ENCODE measurements at regions of chr11 and their contacts with region 1.

Region 1: DNA sequence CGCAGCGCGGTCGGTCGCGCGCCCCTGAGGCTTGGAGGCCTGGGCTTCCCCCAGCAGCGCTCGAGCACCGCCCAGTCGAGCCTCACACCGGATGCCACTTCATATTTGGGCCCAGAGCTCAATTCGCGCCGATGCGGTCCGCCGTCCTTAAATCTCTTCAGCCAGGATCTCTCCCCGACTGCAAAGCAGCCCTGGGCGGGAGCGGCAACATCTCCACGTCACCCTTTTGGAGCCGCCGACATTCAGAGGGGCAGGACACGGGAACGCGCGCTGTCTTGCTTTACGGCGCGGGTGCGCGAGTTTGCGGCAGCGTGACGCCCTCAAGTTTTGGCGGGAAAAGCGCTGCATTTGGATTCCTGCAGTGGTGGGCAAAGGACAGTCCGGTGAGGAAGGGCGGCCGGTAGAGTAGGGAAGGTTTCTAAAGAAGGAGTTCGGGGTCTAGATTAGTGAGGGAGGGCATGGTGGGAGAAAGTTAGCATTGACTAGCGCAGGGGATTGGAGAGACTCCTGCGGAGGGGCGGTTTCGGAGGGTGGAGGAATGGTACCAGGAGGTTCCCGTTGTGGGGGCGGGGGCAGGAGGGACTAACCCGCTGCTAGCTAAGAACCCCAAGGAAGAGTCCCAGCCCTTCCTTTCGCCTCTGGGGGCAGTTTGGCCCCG is 796 bp downstream of the CHEK1 start:
- DNase-seq: peak; percentile 92
- H3K4me3 Mint-ChIP-seq: peak overlapping the region; percentile 88
- H3K27ac Mint-ChIP-seq: peak overlapping the region; percentile 93
- H3K4me1 Mint-ChIP-seq: peaks cover 21% of the 10 kb centered on the region
- H3K27me3 Mint-ChIP-seq: no peaks in the 10 kb centered on the region

Region 2: DNA sequence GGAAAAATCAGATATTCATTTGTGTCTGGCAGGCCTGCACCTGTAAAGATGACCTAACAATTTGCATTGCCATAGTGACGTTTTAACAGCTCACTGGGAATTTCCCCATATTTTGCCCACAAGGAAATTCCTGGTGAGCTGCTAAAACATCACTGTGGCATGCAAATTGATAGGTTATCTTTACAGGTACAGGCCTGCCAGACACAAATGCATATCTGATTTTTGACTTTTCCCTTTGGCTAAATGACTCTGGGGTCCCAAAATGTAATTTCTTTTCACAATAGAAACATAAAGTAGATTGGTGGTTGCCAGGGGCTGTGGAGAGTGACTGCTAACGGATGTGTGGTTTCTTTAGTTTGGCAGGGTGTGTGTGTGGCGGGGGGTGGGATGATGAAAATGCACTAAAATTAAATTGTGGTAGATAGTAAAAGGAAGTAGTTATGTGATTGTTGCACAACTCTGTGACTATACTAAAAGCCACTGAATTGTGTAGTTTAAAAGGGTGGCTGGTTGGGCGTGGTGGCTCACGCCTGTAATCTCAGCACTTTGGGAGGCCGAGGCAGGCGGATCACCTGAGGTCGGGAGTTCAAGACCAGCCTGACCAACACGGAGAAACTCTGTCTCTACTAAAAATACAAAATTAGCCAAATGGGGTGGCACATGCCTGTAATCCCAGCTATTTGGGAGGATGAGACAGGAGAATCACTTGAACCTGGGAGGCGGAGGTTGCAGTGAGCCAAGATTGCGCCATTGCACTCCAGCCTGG is 111.2 kb before region 1 on chr11:
- CTCF ChIA-PET with region 1: no interaction called
- POLR2A ChIA-PET with region 1: no interaction called
- intact Hi-C with region 1: loop called (anchors 1 kb)
- DNase-seq: peak; percentile 79
- H3K4me3 Mint-ChIP-seq: no peak overlapping the region
- H3K27ac Mint-ChIP-seq: peak overlapping the region; percentile 82
- H3K4me1 Mint-ChIP-seq: peaks cover 25% of the 10 kb centered on the region
- H3K27me3 Mint-ChIP-seq: no peaks in the 10 kb centered on the region

Region 3: GRCh38 chr11:125874556-125875124 is 248.9 kb after region 1 on chr11:
- CTCF ChIA-PET with region 1: no interaction called
- POLR2A ChIA-PET with region 1: no interaction called
- intact Hi-C with region 1: loop called (anchors 2 kb)
- DNase-seq: peak; percentile 51
- H3K4me3 Mint-ChIP-seq: no peak overlapping the region
- H3K27ac Mint-ChIP-seq: no peak overlapping the region
- H3K4me1 Mint-ChIP-seq: no peaks in the 10 kb centered on the region
- H3K27me3 Mint-ChIP-seq: peaks cover 2% of the 10 kb centered on the region

Region 4: GRCh38 chr11:125887373-125888324 is 261.9 kb after region 1 on chr11 and contains the start of gene HYLS1:
- CTCF ChIA-PET with region 1: no interaction called
- POLR2A ChIA-PET with region 1: interaction called, 5 read pairs
- intact Hi-C with region 1: loop called (anchors 1 kb)
- DNase-seq: peak; percentile 99
- H3K4me3 Mint-ChIP-seq: peak within 1 kb of the TSS; percentile 74
- H3K27ac Mint-ChIP-seq: peak within 1 kb of the TSS; percentile 93
- H3K4me1 Mint-ChIP-seq: peaks cover 31% of the 10 kb centered on the region
- H3K27me3 Mint-ChIP-seq: peaks cover 6% of the 10 kb centered on the region
- total RNA-seq, gene HYLS1: 8.2 to 8.3 TPM